Activated B cell treated with CpG ODN at 0.5 μM for 24 hours (primary cell): ENCODE measurements at regions of chr20 and their contacts with region 1.

Region 1: DNA sequence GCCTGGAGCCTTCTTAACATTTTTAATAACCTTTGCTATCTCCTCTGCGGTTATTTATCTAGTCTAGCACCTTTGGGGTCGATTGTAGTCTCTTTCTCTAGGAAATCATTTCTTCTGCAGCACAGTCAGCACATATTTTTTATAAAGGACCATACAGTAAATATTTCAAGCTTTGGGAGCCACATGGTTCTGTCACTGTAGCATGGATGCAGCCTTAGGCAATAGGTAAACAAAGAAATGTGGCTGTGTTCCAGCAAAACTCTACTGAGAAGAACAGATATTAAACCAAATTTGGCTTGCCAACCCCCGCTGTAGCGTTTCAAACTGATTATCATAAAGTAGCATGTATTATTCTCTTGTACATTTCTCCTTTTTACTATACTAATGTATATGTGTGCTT is 95.7 kb downstream of the SLC23A2 start:
- DNase-seq: no peak
- ATAC-seq: no peak
- H3K4me3 Mint-ChIP-seq: no peak overlapping the region
- H3K27ac Mint-ChIP-seq: no peak overlapping the region
- H3K4me1 Mint-ChIP-seq: no peaks in the 10 kb centered on the region
- H3K27me3 Mint-ChIP-seq: no peaks in the 10 kb centered on the region
- CTCF ChIP-seq: no peak

Region 2: GRCh38 chr20:4944518-4945313 is 39.1 kb after region 1 on chr20:
- CTCF ChIA-PET with region 1: no interaction called
- POLR2A ChIA-PET with region 1: no interaction called
- intact Hi-C with region 1: loop called (anchors 5 kb)
- DNase-seq: no peak
- ATAC-seq: no peak
- H3K4me3 Mint-ChIP-seq: no peak overlapping the region
- H3K27ac Mint-ChIP-seq: no peak overlapping the region
- H3K4me1 Mint-ChIP-seq: peaks cover 85% of the 10 kb centered on the region
- H3K27me3 Mint-ChIP-seq: no peaks in the 10 kb centered on the region
- CTCF ChIP-seq: no peak